ENCODE measurements at regions of chr15 and their contacts with region 1.

Region 1: DNA sequence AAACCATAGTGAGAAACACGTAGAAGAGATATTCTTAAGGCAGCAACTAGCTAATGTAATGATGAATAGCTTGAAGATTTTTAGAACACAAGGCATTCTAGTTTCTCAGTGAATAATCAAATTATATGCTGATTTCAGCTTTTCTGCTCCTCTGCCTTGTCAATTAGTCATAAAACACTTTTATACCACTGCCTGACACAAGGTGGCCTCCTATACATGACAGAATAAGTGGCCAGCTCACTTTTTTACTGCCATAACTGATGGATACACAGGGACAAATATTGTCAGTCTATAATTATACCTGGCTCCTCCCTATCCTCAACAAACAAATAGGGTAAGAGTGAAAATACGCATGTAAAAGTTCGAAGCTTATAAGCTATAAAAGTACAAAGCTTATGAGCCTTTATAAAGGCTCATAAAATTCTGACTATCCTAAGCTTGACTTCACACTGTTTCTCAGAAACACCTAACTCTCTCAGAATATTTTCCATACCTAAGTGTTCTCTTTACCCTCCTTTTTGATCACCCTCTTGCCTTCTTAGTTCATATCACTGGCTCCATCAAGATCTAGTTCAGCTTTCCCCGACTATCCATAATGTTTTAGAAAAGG is 81.6 kb downstream of the HERC1 start:
- DNase-seq: no peak
- ATAC-seq: peak; percentile 71

Region 2: DNA sequence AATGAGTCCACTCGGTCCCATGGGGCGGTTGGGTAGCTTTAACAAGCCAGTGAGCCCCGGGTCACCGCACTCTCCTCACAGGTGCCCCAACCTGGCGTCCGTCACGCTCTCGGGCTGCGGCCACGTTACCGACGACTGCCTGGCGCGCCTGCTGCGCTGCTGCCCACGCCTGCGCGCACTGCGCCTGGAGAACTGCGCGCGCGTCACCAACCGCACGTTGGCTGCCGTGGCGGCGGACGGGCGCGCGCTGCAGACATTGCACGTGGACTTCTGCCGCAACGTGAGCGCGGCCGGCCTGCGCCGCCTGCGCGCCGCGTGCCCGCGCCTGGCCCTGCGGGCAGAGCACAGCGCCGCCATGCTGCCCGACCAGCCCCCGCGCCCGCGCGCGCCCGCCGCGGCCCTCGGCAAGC is 151.6 kb before region 1 on chr15:
- intact Hi-C with region 1: no loop called
- DNase-seq: peak; percentile 95
- ATAC-seq: peak; percentile 77

Region 3: GRCh38 chr15:63833021-63833696 is 81.0 kb after region 1 on chr15:
- intact Hi-C with region 1: no loop called
- DNase-seq: peak; percentile 76
- ATAC-seq: peak; percentile 71

Region 4: DNA sequence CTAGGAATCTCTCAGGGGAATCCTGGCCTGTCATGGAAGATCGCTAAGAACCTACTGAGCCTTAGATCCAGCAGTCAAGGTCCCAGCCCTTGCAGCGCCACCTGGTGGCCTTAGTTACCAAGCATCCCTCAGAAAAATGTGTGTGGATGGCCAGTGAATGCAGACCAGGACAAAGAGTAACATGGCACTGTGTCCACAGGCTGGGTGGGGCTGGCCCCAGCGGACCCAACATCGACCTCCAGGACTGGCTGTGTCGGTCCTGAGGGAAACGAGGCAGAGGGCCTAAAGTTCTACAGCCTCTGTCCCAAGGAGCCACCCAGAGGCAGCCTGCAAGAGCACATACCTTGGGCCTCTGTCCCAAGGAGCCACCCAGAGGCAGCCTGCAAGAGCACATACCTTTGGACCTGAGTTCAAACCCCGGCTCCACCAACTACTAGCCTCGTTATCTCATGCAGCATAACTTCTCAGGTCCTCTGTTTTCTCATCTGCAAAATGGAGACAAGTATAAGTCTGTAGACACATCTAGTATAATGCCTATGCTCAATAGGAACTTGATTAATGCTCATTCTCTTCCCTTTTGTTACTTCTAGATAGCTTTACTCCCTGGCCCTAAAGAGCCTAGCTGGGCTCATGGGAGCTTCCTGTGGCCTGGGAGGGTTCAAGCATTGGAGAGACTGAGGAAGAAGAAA is 139.0 kb after region 1 on chr15:
- intact Hi-C with region 1: loop called (anchors 1 kb)
- DNase-seq: peak; percentile 90
- ATAC-seq: peak; percentile 62

Region 5: GRCh38 chr15:64067564-64068030 is 315.4 kb after region 1 on chr15:
- intact Hi-C with region 1: loop called (anchors 2 kb)
- DNase-seq: no peak
- ATAC-seq: peak; percentile 71

Region 6: GRCh38 chr15:64153480-64154367 is 401.5 kb after region 1 on chr15:
- intact Hi-C with region 1: loop called (anchors 10 kb)
- DNase-seq: peak; percentile 95
- ATAC-seq: peak; percentile 84